ENCODE measurements at regions of chr16 and their contacts with region 1.

Region 1: GRCh38 chr16:11977376-11978041 is 975 bp downstream of the SNX29 start:
- DNase-seq: no peak
- H3K4me3 Mint-ChIP-seq: peak overlapping the region; percentile 96
- H3K27ac Mint-ChIP-seq: peak overlapping the region; percentile 84
- H3K4me1 Mint-ChIP-seq: peaks cover 30% of the 10 kb centered on the region
- H3K27me3 Mint-ChIP-seq: peaks cover 2% of the 10 kb centered on the region

Region 2: DNA sequence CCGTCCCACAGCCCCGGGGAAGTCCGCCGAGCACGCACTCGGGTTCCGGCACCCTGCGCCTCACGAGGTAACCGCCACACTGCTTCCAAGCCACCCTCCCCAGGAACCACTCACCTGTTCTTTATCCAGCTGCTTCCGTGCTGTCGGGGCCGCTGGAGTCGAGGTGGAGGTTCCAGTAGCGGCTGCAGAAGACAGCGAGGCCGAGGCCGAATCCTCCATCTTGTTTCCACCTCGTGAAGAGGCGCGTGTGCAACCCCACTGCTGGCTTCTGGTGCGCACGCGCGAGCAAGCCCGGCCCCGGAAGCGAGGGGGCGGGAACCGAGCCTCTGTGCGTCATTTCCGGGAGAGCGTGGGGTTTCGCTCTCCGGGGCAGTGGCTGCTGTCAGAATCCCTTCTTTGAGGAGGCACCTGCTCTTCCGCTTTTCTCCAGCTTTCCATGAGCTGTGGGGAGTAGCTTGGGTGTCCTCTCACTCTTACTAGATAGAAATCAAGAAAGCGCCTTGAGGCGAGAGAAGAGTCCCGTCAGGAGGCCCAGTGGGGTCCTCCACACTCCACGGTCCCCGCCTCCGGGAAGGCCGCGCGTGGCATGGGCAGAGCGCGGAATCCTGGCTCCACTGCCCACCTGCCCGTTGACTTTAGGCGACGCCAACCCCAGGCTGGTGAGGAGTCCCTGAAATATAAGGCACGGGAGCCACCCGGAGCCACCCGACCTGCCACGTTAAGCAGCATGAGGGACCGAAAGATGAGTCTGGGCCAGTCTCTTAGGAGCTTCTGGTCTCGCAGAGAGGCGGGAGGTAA is 126.0 kb before region 1 on chr16 and contains the start of gene RSL1D1:
- intact Hi-C with region 1: loop called (anchors 2 kb)
- DNase-seq: peak; percentile 95
- H3K4me3 Mint-ChIP-seq: peak within 1 kb of the TSS; percentile 99
- H3K27ac Mint-ChIP-seq: peak within 1 kb of the TSS; percentile 97
- H3K4me1 Mint-ChIP-seq: peaks cover 44% of the 10 kb centered on the region
- H3K27me3 Mint-ChIP-seq: no peaks in the 10 kb centered on the region
- total RNA-seq, gene RSL1D1: 345 and 369 TPM in 2 replicates

Region 3: DNA sequence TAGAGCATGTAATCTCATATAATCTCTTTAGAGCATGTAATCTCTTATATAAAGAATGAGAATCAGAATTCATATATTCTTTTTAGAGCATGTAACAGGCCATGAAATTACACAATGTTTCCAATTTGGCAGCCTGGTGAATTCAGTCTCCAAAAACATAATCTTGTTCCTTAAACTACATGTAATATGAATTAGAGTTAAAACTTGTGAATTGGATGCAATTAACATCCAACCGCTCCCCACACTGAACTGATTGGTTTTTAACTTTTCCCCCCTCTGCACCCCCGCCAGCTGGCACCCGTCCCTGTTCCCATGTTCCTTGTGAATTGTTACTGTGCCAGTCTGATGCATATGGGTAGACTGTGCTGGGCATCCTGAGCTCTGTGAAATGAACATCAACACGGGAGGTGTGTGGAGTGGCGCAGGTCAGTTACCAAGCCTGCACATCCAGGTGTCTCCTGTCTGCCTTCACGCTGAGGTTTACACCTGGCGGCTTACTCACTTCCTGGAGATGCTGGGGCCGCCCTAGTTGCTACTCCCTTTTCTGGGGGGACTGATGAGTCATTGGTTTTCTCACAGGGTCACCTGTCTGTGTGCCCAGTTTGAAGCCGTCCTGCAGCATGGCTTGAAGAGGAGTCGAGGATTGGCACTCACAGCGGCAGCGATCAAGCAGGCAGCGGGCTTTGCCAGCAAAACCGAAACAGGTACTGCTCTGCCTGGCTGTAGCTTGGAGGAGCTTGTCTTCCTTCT is 49.4 kb after region 1 on chr16:
- intact Hi-C with region 1: loop called (anchors 1 kb)
- DNase-seq: no peak
- H3K4me3 Mint-ChIP-seq: no peak overlapping the region
- H3K27ac Mint-ChIP-seq: no peak overlapping the region
- H3K4me1 Mint-ChIP-seq: no peaks in the 10 kb centered on the region
- H3K27me3 Mint-ChIP-seq: no peaks in the 10 kb centered on the region

Region 4: GRCh38 chr16:12082226-12082887 is 104.8 kb after region 1 on chr16:
- intact Hi-C with region 1: loop called (anchors 5 kb)
- DNase-seq: no peak
- H3K4me3 Mint-ChIP-seq: no peak overlapping the region
- H3K27ac Mint-ChIP-seq: peak overlapping the region; percentile 71
- H3K4me1 Mint-ChIP-seq: peaks cover 51% of the 10 kb centered on the region
- H3K27me3 Mint-ChIP-seq: no peaks in the 10 kb centered on the region

Region 5: DNA sequence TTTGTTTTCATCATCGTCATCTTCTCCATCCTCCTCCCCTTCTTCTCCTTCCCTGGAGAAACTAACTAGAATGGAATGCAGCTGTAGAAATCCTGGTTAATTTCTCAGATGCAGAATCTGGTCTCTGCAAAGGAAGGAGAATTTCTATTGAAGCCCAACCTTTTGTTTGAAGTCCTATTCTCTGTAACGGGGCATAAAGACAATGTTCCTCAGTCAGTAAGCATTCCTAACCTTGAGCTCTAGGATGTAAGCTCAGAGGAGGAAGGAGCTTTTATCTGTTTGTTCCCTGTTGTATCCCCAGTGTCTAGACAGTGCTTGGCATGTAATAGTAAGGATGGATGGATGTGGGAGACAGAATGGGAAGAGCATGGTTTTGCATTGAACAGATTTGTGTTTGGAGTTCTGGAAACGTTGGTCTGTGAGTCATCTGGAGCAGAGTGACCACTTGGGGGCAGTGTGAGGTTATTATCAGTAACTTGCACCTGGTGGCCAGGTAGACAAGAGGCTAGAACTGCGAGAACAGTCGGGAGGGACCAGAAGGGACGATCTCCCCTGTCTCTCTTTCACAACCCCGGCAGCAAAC is 362.7 kb after region 1 on chr16:
- intact Hi-C with region 1: no loop called
- DNase-seq: peak; percentile 2
- H3K4me3 Mint-ChIP-seq: no peak overlapping the region
- H3K27ac Mint-ChIP-seq: no peak overlapping the region
- H3K4me1 Mint-ChIP-seq: no peaks in the 10 kb centered on the region
- H3K27me3 Mint-ChIP-seq: no peaks in the 10 kb centered on the region